Breast epithelium (tissue), 4 donors: ENCODE measurements at regions of chr4 and their contacts with region 1.

Region 1: DNA sequence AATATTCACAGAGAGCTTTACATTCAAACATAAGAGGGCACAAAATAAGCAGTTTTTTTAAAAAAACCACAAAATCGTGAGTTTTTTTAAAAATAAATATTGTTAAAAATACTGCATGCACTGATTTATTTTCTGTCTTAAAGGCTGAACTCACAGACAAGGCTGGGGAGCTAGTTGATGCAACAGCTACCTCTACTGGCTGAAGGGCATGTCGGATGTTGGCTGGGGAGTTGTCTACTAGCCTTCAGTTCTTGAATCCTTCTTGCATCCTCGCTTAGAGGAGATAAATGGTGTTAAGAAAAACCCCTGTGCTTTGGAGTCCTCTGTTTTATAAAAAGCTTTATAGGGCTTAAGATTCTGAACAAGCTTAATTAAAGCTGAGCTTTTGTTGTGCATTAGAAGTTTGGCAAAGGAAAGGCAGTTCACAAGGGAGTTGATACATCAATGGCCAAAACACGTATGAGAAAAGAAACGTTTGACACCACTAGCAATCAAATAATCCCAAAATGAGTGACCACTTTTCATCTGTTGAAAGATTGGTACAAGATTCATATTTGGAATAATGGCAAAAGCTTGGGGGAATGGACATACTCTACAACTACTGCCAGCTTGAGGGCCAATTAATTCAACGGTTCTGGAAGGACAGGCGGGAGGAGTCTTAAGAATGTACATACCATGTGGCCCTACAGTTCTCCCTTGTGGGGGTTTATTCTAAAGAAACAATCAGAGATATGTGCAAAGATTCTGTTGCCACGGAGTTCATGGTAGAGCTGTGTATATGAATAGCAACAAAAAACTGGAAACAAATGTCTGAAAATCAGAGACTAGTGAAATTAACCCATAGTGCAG is 94.7 kb downstream of the SEL1L3 start:
- DNase-seq: peak in 1 of 2 donors; percentile 30
- H3K4me3 ChIP-seq: no peak overlapping the region
- H3K27ac ChIP-seq: no peak overlapping the region
- H3K4me1 ChIP-seq: no peaks in the 10 kb centered on the region
- H3K27me3 ChIP-seq: no peaks in the 10 kb centered on the region
- CTCF ChIP-seq: peak in 2 of 3 donors; percentile 49 to 60
- POLR2A ChIP-seq: no peak

Region 2: GRCh38 chr4:25439918-25440477 is 328.1 kb before region 1 on chr4:
- intact Hi-C with region 1: loop called (anchors 5 kb)
- DNase-seq: peak in 1 of 2 donors; percentile 41
- H3K4me3 ChIP-seq: no peak overlapping the region
- H3K27ac ChIP-seq: no peak overlapping the region
- H3K4me1 ChIP-seq: no peaks in the 10 kb centered on the region
- H3K27me3 ChIP-seq: no peaks in the 10 kb centered on the region
- CTCF ChIP-seq: peak; percentile 35 to 69 (median 55)
- POLR2A ChIP-seq: no peak

Region 3: GRCh38 chr4:25857403-25857802 is 89.3 kb after region 1 on chr4:
- intact Hi-C with region 1: no loop called
- DNase-seq: no peak
- H3K4me3 ChIP-seq: no peak overlapping the region
- H3K27ac ChIP-seq: no peak overlapping the region
- H3K4me1 ChIP-seq: no peaks in the 10 kb centered on the region
- H3K27me3 ChIP-seq: no peaks in the 10 kb centered on the region
- CTCF ChIP-seq: no peak
- POLR2A ChIP-seq: no peak

Region 4: GRCh38 chr4:26015133-26015651 is 247.1 kb after region 1 on chr4:
- intact Hi-C with region 1: no loop called
- DNase-seq: peak in 1 of 2 donors; percentile 87
- H3K4me3 ChIP-seq: no peak overlapping the region
- H3K27ac ChIP-seq: peak overlapping the region; percentile 45 to 67
- H3K4me1 ChIP-seq: peaks cover 0 to 8% of the 10 kb centered on the region in 2 donors
- H3K27me3 ChIP-seq: no peaks in the 10 kb centered on the region
- CTCF ChIP-seq: no peak
- POLR2A ChIP-seq: no peak

Region 5: DNA sequence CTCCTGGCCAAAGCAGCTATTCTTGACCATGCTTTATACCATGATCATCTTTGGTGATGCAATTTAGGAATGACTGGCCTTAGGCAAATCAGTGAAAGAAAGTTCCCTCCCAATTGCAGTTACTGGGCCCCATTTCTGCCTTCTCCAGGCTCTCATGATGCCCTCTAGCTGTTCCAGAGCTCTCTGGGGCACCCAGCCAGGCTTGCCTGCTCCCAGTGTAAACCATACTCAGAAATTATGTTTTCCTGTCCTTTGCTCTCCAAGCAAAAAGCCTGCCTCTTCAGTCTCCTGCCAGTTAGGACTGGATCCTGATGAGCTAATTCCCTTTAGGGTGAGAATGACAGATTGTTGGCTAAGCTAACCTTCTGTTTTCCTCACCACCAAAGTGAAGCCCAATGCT is 467.4 kb after region 1 on chr4:
- intact Hi-C with region 1: loop called (anchors 5 kb)
- DNase-seq: no peak
- H3K4me3 ChIP-seq: no peak overlapping the region
- H3K27ac ChIP-seq: no peak overlapping the region
- H3K4me1 ChIP-seq: no peaks in the 10 kb centered on the region
- H3K27me3 ChIP-seq: no peaks in the 10 kb centered on the region
- CTCF ChIP-seq: no peak
- POLR2A ChIP-seq: no peak